AG04449 (cell line): ENCODE measurements at regions of chr14 and their contacts with region 1.

Region 1: DNA sequence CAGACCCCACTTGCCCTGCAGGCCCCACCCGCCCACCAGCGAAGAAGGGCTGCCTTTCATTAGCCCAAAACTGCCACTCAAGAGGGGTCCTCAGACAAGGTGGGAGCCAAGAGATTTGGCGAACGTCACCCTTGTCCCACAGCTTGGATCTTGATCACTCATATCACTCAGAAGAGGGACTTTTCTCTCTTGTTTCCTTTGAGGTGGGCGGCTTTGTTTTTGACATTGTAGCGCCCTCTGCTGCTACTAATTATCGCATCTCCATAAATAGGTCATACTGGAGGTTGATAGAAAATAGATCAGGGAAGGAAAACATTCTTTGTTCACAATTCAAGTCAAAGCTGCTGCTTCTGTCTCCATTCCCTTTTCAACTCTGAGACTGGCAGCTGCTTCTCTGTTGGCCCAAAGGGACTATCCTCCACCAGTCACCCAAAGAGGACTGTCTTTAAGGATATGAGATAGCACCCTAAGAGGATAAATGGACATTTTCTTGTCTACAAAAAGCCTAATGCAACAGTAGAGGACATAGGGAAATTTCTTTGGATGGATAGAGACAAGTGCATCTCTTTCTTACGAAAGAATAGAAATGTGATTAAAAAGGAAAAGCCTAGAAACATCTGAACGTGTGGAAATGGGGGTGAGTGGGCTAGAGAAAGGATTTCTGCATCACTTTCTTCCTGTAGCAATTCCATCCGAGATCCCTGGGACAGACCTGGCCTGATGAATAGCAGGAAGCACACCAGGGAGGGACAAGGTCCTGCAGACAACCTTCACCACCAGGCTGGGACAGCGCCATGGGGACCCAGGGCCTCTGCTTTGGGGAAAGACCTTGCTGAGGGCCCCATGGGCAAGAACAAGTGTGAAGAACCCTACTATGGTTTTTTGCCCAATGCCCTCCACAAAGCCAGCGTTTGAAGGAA is 115.8 kb downstream of the DAD1 start:
- DNase-seq: no peak
- H3K4me3 ChIP-seq: no peak overlapping the region
- CTCF ChIP-seq: peak; percentile 36

Region 2: DNA sequence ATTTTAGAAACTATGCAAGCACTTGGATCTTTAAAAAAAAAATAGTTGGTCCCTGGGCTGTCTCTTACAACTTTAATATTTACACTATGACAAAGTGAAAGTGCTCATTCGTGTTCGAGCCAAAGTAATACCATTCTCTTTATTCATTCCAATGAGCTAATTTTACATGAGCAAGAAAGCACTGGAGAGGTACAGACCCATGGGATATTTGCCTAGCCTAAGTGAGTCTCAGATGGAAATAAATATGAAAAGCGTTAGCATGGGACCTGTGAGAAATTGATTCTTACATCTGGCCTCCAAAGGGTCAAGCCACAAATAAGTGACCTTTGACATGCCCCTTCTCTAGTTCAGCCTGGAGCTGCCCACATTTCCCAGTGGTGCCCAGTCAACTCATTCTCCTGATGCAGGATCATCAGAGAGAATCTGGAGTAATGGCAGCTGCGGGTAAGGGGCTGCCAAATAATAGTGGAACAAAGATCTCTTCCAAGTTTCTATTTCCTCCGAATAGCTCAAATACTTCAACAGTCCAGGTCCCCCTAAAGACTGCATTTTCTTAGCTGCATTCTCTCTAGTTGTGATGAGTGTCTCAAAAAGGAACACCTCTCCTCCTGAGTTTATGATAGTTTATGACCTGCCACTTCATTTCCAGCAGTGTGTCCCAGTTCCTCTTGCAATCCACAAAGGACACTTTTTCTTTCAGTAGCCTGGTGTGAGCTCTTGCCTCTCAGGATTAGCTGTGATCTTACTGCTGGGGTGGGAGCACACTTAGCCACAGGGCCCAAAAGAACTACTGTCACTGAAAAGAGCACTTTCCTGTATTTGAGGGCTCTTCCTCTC is 92.4 kb before region 1 on chr14:
- CTCF ChIA-PET with region 1: interaction called, 51 read pairs
- POLR2A ChIA-PET with region 1: no interaction called
- DNase-seq: no peak
- H3K4me3 ChIP-seq: peak overlapping the region; percentile 26
- CTCF ChIP-seq: no peak

Region 3: DNA sequence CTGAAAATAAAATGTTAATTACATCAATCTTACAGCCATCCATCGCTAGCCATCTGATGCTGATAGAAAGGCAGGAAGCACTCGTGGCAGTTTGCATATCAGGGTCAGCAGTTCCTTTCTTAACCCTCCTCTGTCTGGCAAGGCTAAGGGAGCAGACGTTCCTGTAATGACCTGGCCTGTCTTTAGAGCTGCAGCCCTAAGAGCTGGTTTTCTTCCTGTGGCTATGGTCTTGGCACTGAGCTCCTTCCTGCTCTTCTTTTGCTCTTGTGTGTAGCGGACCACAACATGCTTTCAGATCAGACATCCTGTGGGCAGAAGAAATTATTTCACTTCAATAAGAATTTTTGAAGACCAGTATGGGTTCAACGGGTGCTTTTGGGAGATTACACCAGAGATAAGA is 54.6 kb before region 1 on chr14:
- CTCF ChIA-PET with region 1: interaction called, 23 read pairs
- POLR2A ChIA-PET with region 1: no interaction called
- DNase-seq: no peak
- H3K4me3 ChIP-seq: no peak overlapping the region
- CTCF ChIP-seq: no peak

Region 4: GRCh38 chr14:22460461-22461195 is 12.6 kb before region 1 on chr14:
- CTCF ChIA-PET with region 1: interaction called, 20 read pairs
- POLR2A ChIA-PET with region 1: no interaction called
- DNase-seq: no peak
- H3K4me3 ChIP-seq: no peak overlapping the region
- CTCF ChIP-seq: no peak